AG04449 (cell line): ENCODE measurements at regions of chr6 and their contacts with region 1.

Region 1: GRCh38 chr6:105431226-105431625 is 28.3 kb upstream of the PREP start:
- DNase-seq: no peak
- H3K4me3 ChIP-seq: no peak overlapping the region
- CTCF ChIP-seq: peak; percentile 25

Region 2: GRCh38 chr6:105257340-105257739 is 173.9 kb before region 1 on chr6:
- CTCF ChIA-PET with region 1: no interaction called
- POLR2A ChIA-PET with region 1: no interaction called
- DNase-seq: no peak
- H3K4me3 ChIP-seq: no peak overlapping the region
- CTCF ChIP-seq: no peak

Region 3: DNA sequence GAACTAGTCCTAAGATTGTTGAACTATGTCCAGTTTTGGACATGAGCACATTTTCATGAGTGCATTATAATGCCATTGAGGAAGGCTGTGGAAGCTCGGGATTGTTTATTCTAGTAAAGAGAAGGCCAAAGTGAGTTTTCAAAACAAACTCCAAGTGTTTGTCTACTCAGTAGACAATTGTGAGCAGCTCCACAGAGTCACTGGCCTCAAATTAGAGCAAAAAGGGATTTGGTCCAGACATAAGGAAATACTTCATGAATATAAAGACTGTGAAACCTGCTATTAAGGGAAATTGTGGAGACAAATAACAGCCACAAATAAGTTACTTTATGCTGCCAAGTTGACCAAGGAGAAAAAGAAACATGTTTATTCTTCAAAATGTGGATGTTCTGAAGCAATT is 14.3 kb after region 1 on chr6:
- CTCF ChIA-PET with region 1: interaction called, 12 read pairs
- POLR2A ChIA-PET with region 1: no interaction called
- DNase-seq: no peak
- H3K4me3 ChIP-seq: no peak overlapping the region
- CTCF ChIP-seq: no peak

Region 4: DNA sequence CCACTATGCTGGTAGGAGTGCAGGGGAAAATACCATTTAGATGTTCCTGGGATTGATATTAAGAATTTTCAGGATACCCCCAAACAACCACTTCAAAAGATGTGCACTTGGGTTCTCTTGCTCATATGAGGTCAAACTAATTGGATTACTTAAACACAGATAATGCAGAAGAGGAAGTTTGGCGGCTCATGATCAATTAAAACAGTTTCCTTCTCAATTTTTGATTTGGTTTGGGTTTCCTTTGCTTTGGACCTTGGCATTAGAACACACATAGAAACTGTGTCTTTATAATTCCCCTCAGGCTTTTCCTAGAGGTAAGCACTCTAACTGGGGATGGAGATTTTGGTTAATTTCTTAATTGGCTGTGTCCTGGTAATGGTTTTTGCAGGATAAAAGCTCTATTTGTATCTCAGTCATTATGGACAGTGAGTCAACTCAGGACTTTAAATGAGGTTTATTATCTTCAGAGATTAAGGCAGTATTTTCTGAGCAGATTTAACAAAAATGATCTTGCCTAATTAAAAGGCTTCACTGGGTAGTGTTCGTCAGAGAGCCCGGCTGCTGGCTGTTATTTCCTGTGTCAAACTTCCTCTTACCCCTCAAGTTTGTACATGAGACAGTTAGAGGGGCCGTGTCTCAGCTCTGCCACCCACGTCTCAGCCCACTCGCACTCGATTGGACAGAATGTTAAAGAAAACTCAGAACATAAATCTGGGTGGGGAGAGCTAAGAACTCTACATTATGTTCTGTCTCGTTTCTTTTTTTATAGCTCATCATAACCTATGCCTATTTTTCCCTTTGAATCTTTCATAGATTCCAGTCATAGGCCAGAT is 21.9 kb after region 1 on chr6:
- CTCF ChIA-PET with region 1: interaction called, 12 read pairs
- POLR2A ChIA-PET with region 1: no interaction called
- DNase-seq: no peak
- H3K4me3 ChIP-seq: no peak overlapping the region
- CTCF ChIP-seq: no peak

Region 5: DNA sequence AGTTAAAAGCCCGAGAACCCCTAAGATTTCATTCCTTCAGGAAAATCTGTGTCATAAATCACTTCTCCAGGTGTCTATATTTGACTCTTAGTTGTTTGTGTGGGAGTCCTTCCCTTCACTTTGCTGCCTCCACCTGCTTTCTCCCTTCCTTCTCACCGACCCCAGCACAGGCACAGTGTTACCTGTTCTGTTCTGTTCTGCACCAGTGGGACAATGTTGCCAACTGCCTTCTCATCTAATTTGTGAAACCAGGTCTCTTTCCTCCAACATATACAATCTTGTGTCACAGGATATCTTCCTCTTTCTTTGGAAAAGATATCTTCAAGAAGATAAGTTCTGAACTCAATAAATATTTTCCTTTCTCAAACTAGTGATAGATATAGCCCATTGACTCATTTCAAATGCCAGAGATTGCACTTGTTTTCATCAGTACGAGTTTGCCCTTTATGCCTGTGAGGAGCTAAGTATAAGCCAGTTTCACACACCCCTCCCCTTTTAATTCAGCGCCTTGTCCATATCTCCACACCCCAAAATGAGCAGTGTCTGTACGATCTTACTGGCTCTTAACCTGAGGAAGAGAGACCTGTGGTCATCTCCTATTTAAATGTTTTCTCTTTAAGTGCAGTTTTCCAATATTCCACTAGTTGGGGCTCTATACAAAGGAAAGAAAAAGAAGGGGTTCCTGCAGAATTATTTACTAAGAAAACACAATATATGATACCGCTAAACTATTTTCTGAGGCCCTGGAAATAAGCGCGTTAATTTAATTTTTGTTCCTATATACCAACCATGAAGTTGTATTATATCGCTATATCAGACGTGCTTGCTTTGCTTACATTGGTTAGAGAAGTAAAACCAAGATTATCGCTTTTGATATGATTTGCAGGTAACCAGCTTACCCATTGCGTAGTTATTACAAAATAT is 53.3 kb after region 1 on chr6:
- CTCF ChIA-PET with region 1: interaction called, 22 read pairs
- POLR2A ChIA-PET with region 1: no interaction called
- DNase-seq: no peak
- H3K4me3 ChIP-seq: no peak overlapping the region
- CTCF ChIP-seq: peak; percentile 49

Region 6: GRCh38 chr6:106085984-106086813 is 655.0 kb after region 1 on chr6 and contains the start of gene PRDM1:
- CTCF ChIA-PET with region 1: interaction called, 24 read pairs
- POLR2A ChIA-PET with region 1: no interaction called
- DNase-seq: no peak
- H3K4me3 ChIP-seq: peak within 1 kb of the TSS; percentile 68
- CTCF ChIP-seq: no peak

Region 7: DNA sequence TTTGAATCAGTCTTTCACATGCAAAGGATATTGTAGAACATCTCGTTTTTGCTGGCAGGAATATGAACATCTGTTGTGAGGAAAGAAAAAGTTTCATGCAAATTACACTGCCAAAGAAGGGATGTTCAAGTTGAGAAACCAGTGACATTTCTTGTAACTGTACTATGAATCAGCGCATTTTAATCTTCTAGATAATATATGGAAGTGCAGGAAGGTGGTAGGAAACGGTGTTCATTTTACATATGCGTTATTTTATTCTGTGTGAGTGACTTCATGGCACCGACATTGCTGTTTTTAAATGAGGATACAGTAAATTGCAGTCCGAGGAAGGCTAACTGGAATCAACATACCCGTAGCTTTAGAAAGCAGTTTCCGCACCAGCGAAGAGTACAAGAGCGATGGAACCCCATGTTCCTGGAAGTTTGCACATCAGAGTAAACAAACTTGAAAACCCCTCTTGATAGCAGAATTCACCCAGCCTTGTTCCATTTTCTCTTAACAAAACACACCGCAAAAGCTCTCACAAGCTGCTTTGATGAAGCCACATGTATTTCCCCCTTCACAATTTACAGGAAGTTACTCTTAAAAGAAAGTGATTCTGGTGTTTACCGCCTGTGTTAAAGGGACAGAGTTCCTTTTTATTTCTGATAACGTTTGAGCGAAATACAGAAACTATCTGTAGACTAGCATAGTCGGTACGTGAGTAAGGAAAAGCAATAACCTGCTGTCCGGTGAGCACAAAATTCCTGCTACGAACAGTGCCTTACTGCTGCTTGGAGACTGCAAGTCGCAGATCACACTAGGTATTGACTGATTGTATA is 666.4 kb after region 1 on chr6:
- CTCF ChIA-PET with region 1: interaction called, 23 read pairs
- POLR2A ChIA-PET with region 1: no interaction called
- DNase-seq: no peak
- H3K4me3 ChIP-seq: peak overlapping the region; percentile 53
- CTCF ChIP-seq: no peak